GM10248 (cell line): ENCODE measurements at regions of chr4 and their contacts with region 1.

Region 1: DNA sequence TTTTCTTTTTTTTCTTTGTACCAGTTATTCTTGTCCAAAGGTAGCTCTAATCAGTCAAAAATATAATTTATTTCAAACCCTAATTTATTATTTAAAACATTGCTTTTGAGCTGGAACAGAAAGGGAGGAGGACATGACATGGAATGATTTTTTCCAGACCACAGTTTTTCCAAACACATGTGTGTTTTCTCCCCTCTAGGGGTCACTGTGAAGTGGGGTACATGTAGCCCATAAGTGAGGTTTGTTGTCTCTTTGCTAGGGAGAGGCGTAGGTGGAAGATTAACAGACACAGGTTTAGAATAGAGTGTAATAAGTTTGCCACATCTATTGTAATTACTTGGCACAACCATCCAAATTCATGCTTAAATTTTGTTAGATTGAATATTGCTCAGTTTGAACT is 83.0 kb downstream of the TNIP2 start:
- DNase-seq: no peak
- CTCF ChIP-seq: peak; percentile 23

Region 2: DNA sequence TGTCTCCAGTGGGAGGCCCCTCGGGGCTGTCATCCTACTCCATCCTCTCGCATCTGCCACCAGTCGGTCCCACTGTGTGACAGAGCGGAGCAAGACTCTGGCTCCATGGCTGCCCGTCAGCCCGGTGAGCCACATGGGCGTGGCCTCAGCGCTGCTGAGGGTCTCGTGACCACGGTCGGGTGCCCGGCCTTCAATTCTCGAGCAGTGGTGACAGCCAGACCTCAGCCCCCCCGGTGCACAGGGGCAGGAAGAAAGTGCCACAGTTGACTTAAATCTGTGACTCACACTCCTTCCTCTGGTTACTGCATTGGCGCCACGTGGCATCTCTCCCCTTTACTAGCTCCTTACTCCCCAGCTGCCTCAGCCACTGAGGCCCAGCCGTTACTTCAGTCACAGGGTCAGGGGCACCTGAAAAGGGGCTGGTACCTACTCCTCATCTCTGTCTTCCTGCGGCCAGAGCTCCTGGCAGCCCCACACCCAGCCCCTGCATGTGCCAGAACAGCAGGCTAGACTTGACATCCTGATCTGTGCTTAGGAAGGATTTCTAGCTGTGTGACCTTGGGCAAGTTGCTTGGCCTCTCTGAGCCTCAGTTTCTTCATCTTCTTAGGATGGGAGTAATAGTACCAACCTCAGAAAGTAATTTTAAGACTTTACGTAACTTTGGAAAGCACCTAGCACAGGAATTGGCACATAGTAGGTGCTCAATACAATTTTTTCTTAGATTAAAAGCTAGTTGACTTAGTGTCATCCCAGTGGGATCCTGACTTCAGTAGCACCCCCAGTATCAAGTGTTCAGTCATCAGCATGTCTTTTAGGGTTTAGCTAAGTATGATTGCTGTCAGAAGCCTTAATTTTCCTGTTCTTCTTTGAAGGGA is 16.9 kb after region 1 on chr4:
- CTCF ChIA-PET with region 1: interaction called, 10 read pairs
- POLR2A ChIA-PET with region 1: no interaction called
- DNase-seq: no peak
- CTCF ChIP-seq: no peak